ENCODE measurements at regions of chr7 and their contacts with region 1.

Region 1: DNA sequence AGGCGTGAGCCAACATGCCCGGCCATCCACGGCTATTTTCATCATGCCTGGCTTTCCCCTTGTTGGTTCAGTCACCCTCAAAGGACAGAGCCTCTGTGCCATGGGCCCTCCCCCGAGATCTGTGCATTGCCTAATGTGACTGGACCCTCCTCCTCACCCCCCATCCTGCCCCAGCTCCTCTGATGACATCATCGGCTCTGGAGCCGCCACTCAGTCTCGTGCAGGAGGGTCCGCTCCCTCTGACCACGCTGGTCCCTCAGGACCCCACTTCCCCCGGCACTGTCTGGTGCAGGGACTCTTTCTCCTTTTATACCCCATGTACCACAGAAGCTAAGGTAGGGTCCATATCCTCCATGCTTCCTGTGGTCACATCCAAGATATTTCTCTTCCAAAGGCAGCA is 33.2 kb upstream of the BAIAP2L1 start:
- DNase-seq: no peak

Region 2: GRCh38 chr7:98745722-98746318 is 311.7 kb after region 1 on chr7:
- intact Hi-C with region 1: loop called (anchors 10 kb)
- DNase-seq: peak; percentile 43 to 88 (median 74)

Region 3: GRCh38 chr7:98841179-98841997 is 407.3 kb after region 1 on chr7:
- intact Hi-C with region 1: loop called (anchors 1 kb)
- DNase-seq: peak; percentile 26 to 92 (median 77)

Measured in head of caudate nucleus (tissue), 42 donors.